Activated CD4-positive, alpha-beta memory T cell treated with anti-CD3 and anti-CD28 coated beads for 36 hours (primary cell): ENCODE measurements at regions of chr10 and their contacts with region 1.

Region 1: GRCh38 chr10:61987951-61988379 is 86.5 kb downstream of the ARID5B start:
- DNase-seq: peak; percentile 50
- H3K4me3 Mint-ChIP-seq: peak overlapping the region; percentile 59
- H3K27ac Mint-ChIP-seq: peak overlapping the region; percentile 95
- H3K4me1 Mint-ChIP-seq: peaks cover 91% of the 10 kb centered on the region
- H3K27me3 Mint-ChIP-seq: no peaks in the 10 kb centered on the region

Region 2: DNA sequence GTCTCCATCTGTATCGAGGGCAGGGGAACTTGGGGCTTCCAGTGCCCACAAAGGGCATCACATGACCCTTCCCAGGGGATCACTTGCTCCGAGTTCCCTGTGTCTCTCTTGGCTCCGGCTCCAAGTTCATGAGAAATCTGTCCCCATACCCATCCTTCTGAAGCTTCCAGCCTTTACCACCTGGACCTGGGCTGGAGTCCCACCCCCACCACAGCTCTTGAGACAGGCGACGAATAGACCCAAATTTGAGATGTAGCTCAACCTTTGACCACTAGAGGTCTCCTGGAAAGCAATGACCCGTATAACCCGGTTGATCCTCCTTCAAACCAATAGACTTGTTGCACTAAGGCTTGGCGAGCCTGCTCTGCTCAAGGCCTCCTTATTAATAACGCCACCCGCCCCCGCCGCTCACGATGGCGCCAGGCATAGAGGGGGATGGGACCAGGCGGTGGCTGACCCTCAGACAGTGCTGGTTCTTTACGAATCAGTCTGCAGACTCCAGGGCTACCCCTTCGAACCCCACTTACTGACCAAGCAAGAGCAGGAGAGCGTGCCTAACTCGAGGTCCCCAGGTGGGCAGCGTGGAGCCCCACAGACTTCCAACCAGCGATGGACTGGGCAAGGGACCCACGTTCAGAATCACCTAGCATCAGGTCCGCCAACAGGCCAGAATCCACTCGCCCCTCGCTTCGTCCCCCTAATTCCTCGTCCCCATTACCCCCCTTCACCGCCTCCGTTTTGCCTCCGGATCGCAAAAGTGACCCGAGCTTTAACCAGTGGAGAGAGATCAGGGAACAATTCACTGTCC is 90.9 kb before region 1 on chr10:
- CTCF ChIA-PET with region 1: interaction called, 8 read pairs
- POLR2A ChIA-PET with region 1: interaction called, 24 read pairs
- intact Hi-C with region 1: loop called (anchors 1 kb)
- DNase-seq: peak; percentile 70
- H3K4me3 Mint-ChIP-seq: peak overlapping the region; percentile 66
- H3K27ac Mint-ChIP-seq: peak overlapping the region; percentile 95
- H3K4me1 Mint-ChIP-seq: peaks cover 43% of the 10 kb centered on the region
- H3K27me3 Mint-ChIP-seq: no peaks in the 10 kb centered on the region

Region 3: GRCh38 chr10:61961278-61961677 is 26.7 kb before region 1 on chr10:
- CTCF ChIA-PET with region 1: interaction called, 3 read pairs
- POLR2A ChIA-PET with region 1: interaction called, 22 read pairs
- intact Hi-C with region 1: loop called (anchors 1 kb)
- DNase-seq: peak; percentile 49
- H3K4me3 Mint-ChIP-seq: peak overlapping the region; percentile 24
- H3K27ac Mint-ChIP-seq: peak overlapping the region; percentile 76
- H3K4me1 Mint-ChIP-seq: peaks cover 87% of the 10 kb centered on the region
- H3K27me3 Mint-ChIP-seq: no peaks in the 10 kb centered on the region

Region 4: DNA sequence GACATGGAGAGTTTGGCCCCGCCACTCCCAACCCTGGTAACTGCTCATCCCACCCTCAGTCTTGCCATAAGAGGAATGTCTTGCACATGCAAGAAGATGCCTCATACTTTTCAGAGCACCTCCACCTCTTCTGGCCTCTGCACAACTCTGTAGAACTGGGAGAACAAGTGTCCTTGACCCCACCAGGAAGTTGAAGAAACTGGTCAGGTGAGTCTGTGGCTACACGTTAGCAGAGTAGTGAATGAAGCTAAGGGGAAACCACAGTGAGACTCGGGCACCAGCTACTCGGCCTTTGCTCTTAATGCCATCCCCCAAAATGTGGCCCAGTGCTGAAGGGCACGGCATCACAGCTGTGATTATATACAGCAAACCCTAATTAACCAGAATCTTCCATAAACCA is 23.6 kb after region 1 on chr10:
- CTCF ChIA-PET with region 1: no interaction called
- POLR2A ChIA-PET with region 1: no interaction called
- intact Hi-C with region 1: no loop called
- DNase-seq: no peak
- H3K4me3 Mint-ChIP-seq: no peak overlapping the region
- H3K27ac Mint-ChIP-seq: no peak overlapping the region
- H3K4me1 Mint-ChIP-seq: peaks cover 53% of the 10 kb centered on the region
- H3K27me3 Mint-ChIP-seq: no peaks in the 10 kb centered on the region